Psoas muscle (tissue), 8 donors: ENCODE measurements at regions of chr15 and their contacts with region 1.

Region 1: DNA sequence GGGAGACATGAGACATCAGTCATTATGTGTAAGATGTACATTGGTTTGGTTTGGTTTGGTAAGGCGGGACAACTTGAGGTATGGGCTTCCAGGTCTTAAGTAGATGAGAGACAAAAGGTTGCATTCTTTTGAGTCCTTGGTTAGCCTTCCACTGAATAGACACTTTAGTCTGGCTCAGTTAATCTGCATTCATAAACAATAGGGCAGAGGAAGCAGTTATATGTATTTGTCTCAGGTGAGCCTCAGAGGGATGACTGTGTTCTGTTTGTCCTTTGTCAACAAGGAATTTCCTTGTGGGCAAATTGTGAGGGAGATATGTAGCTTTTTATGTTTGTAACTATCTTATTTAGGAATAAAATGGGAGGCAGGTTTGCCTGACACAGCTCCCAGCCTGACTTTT is 50.4 kb downstream of the TCF12 start:
- DNase-seq: no peak
- ATAC-seq: no peak
- H3K4me3 ChIP-seq: no peak overlapping the region
- H3K27ac ChIP-seq: no peak overlapping the region
- H3K4me1 ChIP-seq: peaks cover 24% of the 10 kb centered on the region
- H3K27me3 ChIP-seq: no peaks in the 10 kb centered on the region
- CTCF ChIP-seq: no peak

Region 2: GRCh38 chr15:56984681-56985481 is 16.1 kb after region 1 on chr15:
- intact Hi-C with region 1: loop called in 1 of 2 experiments (anchors 1 kb)
- DNase-seq: no peak
- ATAC-seq: peak in 2 of 4 donors; percentile 23 to 44
- H3K4me3 ChIP-seq: no peak overlapping the region
- H3K27ac ChIP-seq: no peak overlapping the region
- H3K4me1 ChIP-seq: peaks cover 79% of the 10 kb centered on the region
- H3K27me3 ChIP-seq: no peaks in the 10 kb centered on the region
- CTCF ChIP-seq: no peak